Naive thymus-derived CD4-positive, alpha-beta T cell (primary cell): ENCODE measurements at regions of chr21 and their contacts with region 1.

Region 1: DNA sequence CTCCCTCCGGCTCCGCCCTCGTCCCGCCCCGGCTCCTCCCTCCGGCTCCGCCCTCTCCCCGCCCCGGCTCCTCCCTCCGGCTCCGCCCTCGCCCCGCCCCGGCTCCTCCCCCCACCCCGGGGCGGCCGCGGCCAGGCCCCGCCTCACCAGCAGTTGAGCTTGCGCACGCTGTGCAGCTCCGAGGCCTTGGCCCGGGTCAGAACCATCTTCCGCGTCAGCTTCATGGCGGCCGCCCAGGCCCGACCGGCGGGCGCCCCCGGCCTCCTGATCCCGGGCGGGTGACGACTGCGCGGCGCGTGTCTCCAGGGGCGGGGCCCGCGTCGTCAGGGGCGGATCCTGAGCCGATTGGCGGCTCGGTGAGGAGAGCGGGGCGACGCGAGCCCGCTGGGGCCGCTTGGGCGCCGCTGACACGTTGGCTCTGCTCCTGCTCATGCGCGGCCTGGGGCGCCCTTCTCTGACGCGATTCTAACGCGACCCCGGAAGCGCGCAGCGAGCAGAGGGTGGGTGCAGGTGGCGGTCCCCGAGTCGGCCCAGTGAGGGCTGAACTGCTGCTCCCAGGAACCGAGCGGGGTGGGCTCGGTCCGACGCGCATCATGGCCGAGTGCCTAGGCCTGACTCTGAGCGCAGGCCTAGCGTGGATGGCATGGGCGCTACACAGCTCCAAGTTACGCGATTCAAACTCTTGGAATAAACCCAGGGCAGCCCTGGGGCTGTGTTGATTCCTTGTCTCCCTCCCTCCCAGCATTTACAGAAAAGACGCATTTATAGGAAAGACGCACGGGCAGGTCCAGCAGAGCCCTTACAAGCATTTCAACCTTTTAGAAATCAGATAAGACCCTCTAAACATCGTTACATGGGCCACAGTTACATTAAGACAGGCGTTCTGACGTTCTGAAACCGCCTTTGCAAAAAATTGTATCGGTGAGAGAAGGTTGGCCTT is at the start of gene CFAP410:
- DNase-seq: peak; percentile 94 to 97 (median 97)
- ATAC-seq: peak; percentile 92
- H3K4me3 ChIP-seq: peak within 1 kb of the TSS; percentile 97
- H3K4me3 Mint-ChIP-seq: peak within 1 kb of the TSS; percentile 85 to 95 (median 92)
- H3K27ac ChIP-seq: peak within 1 kb of the TSS; percentile 96
- H3K27ac Mint-ChIP-seq: peak within 1 kb of the TSS; percentile 95 to 100 (median 97)
- H3K4me1 ChIP-seq: peaks cover 10 to 15% of the 10 kb centered on the region in 2 donors
- H3K4me1 Mint-ChIP-seq: peaks cover 4 to 33% (median 24%) of the 10 kb centered on the region in 7 donors
- H3K27me3 ChIP-seq: no peaks in the 10 kb centered on the region
- H3K27me3 Mint-ChIP-seq: no peaks in the 10 kb centered on the region
- total RNA-seq, gene CFAP410: 20.8 to 66.7 (median 49.5) TPM

Region 2: GRCh38 chr21:44299458-44300261 is 39.6 kb before region 1 on chr21 and contains the start of gene PFKL:
- CTCF ChIA-PET with region 1: interaction called, 4 read pairs
- POLR2A ChIA-PET with region 1: interaction called, 14 read pairs
- intact Hi-C with region 1: loop called (anchors 1 to 2 kb)
- DNase-seq: peak; percentile 28 to 79 (median 47)
- ATAC-seq: peak; percentile 79
- H3K4me3 ChIP-seq: peak within 1 kb of the TSS; percentile 59
- H3K4me3 Mint-ChIP-seq: peak within 1 kb of the TSS; percentile 85 to 95 (median 91)
- H3K27ac ChIP-seq: peak within 1 kb of the TSS; percentile 80
- H3K27ac Mint-ChIP-seq: peak within 1 kb of the TSS; percentile 91 to 97 (median 94)
- H3K4me1 ChIP-seq: peaks cover 30 to 57% of the 10 kb centered on the region in 2 donors
- H3K4me1 Mint-ChIP-seq: peaks cover 36 to 65% (median 49%) of the 10 kb centered on the region in 7 donors
- H3K27me3 ChIP-seq: no peaks in the 10 kb centered on the region
- H3K27me3 Mint-ChIP-seq: no peaks in the 10 kb centered on the region
- total RNA-seq, gene PFKL: 107 to 196 (median 122) TPM

Region 3: GRCh38 chr21:44353191-44353970 is 14.1 kb after region 1 on chr21 and contains the start of gene TRPM2:
- CTCF ChIA-PET with region 1: interaction called, 4 read pairs
- POLR2A ChIA-PET with region 1: interaction called, 37 read pairs
- intact Hi-C with region 1: no loop called
- DNase-seq: peak in 5 of 9 donors; percentile 44 to 61 (median 54)
- ATAC-seq: peak; percentile 86
- H3K4me3 ChIP-seq: peak within 1 kb of the TSS; percentile 40
- H3K4me3 Mint-ChIP-seq: peak within 1 kb of the TSS; percentile 78 to 90 (median 84)
- H3K27ac ChIP-seq: peak within 1 kb of the TSS; percentile 55
- H3K27ac Mint-ChIP-seq: peak within 1 kb of the TSS; percentile 57 to 85 (median 72)
- H3K4me1 ChIP-seq: peaks cover 16 to 38% of the 10 kb centered on the region in 2 donors
- H3K4me1 Mint-ChIP-seq: peaks cover 33 to 59% (median 51%) of the 10 kb centered on the region in 7 donors
- H3K27me3 ChIP-seq: no peaks in the 10 kb centered on the region
- H3K27me3 Mint-ChIP-seq: peaks cover 0 to 20% (median 0%) of the 10 kb centered on the region in 5 donors
- total RNA-seq, gene TRPM2: 1.2 to 29.6 (median 5.3) TPM

Region 4: DNA sequence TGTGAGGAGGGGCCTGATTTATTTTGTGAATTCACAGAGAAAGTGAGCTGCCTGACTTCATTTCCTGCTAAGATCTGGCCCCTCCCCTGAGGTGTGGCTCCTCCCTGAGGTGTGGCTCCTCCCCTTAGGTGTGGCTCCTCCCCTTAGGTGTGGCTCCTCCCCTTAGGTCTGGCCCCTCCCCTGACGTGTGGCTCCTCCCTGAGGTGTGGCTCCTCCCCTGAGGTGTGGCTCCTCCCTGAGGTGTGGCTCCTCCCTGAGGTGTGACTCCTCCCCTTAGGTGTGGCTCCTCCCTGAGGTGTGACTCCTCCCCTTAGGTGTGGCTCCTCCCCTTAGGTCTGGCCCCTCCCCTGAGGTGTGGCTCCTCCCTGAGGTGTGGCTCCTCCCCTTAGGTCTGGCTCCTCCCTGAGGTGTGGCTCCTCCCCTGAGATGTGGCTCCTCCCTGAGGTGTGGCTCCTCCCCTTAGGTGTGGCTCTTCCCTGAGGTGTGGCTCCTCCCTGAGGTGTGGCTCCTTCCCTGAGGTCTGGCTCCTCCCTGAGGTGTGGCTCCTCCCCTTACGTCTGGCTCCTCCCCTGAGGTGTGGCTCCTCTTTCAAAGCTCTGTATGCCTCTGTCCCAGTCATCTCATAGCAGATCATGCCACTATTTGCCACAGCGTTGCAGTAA is 89.2 kb after region 1 on chr21:
- CTCF ChIA-PET with region 1: no interaction called
- POLR2A ChIA-PET with region 1: no interaction called
- intact Hi-C with region 1: loop called in 1 of 2 experiments (anchors 10 kb)
- DNase-seq: peak; percentile 45 to 83 (median 67)
- ATAC-seq: peak; percentile 71
- H3K4me3 ChIP-seq: no peak overlapping the region
- H3K4me3 Mint-ChIP-seq: no peak overlapping the region
- H3K27ac ChIP-seq: no peak overlapping the region
- H3K27ac Mint-ChIP-seq: peak overlapping the region in 3 of 9 donors; percentile 4 to 53 (median 52)
- H3K4me1 ChIP-seq: no peaks in the 10 kb centered on the region
- H3K4me1 Mint-ChIP-seq: peaks cover 0 to 6% (median 0%) of the 10 kb centered on the region in 7 donors
- H3K27me3 ChIP-seq: no peaks in the 10 kb centered on the region
- H3K27me3 Mint-ChIP-seq: no peaks in the 10 kb centered on the region

Region 5: DNA sequence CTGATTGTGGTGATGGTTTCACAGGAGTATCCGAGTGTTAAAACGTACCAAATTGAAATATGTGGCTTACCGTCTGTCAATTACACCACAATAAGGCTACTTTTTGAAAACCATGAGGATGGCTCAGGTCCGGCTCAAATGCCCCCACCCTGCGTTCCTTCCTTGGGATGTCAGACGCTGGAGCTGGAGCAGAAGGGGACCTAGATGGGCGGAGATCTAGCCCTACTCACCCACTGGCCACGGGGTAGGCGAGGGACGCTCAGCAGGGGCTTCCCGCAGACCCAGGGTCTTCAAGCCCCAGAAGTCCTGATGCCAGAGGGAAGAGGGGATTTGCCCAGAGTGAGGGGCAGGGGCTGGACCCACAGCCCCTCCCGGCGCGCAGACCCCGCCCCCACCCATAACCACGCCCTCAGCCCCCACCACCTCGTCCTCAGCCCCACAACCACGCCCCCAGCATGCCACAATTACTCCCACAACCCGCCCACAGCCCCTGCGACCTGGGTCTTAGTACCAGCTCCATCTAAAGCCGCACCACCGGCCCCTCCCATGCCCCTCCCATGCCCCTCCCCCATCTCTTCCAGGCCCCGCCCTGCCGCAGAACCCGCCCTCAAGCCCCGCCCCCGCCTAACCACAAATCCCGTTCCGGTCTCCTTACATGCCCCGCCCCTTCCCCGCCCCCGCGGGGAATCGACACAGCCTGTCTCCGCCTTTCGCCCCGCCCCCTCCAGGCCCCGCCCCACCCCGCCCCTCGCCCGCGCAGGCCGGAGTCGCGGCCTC is 115.7 kb after region 1 on chr21 and contains the start of gene LRRC3:
- CTCF ChIA-PET with region 1: no interaction called
- POLR2A ChIA-PET with region 1: no interaction called
- intact Hi-C with region 1: loop called in 1 of 2 experiments (anchors 1 kb)
- DNase-seq: peak; percentile 61 to 82 (median 81)
- ATAC-seq: peak; percentile 91
- H3K4me3 ChIP-seq: peak within 1 kb of the TSS; percentile 60
- H3K4me3 Mint-ChIP-seq: peak within 1 kb of the TSS; percentile 68 to 84 (median 77)
- H3K27ac ChIP-seq: peak within 1 kb of the TSS; percentile 55
- H3K27ac Mint-ChIP-seq: peak within 1 kb of the TSS in 4 of 9 donors; percentile 1 to 60 (median 54)
- H3K4me1 ChIP-seq: peaks cover 0 to 6% of the 10 kb centered on the region in 2 donors
- H3K4me1 Mint-ChIP-seq: peaks cover 0 to 10% (median 6%) of the 10 kb centered on the region in 7 donors
- H3K27me3 ChIP-seq: no peaks in the 10 kb centered on the region
- H3K27me3 Mint-ChIP-seq: peaks cover 0 to 33% (median 12%) of the 10 kb centered on the region in 5 donors
- total RNA-seq, gene LRRC3: 0.79 to 3.3 (median 1.0) TPM